Activated T-helper 2 cell treated with anti-CD3 and anti-CD28 coated beads, Interferon-gamma antibody, Interleukin-2, Interleukin-4, amounts not matched to agents 10 μg/mL and 5 μg/mL and 100 μg/mL, durations not matched to agents 14 hours and 24 hours and 36 hours (primary cell): ENCODE measurements at regions of chr5 and their contacts with region 1.

Region 1: DNA sequence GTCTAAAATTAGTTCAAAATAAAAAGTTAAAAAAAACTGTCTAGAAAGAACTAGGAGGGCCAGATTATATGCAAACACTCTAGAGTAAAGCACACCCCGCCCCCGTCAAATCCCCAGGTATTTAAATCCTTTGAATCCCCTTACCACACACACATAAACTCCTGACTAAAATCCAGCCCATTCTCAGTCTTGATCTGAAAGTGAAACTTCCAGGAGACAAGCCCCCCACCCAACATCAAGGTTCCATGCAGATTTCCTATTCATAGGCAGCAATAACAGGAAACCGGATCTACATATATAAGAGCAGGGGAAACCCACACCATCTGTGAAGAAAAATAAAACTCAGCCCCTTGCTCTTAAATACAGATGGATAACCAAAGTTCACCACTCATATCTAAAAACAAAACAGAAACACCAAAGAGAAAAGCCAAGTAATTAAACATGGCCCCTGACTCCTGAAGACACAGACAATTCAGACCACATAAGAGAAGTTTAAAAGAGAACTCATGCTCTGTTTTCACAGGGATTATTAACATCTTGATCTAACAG is 42.3 kb downstream of the MARCHF3 start:
- DNase-seq: peak; percentile 15
- H3K4me3 Mint-ChIP-seq: no peak overlapping the region
- H3K27ac Mint-ChIP-seq: peak overlapping the region; percentile 50
- H3K4me1 Mint-ChIP-seq: peaks cover 13% of the 10 kb centered on the region
- H3K27me3 Mint-ChIP-seq: no peaks in the 10 kb centered on the region

Region 2: DNA sequence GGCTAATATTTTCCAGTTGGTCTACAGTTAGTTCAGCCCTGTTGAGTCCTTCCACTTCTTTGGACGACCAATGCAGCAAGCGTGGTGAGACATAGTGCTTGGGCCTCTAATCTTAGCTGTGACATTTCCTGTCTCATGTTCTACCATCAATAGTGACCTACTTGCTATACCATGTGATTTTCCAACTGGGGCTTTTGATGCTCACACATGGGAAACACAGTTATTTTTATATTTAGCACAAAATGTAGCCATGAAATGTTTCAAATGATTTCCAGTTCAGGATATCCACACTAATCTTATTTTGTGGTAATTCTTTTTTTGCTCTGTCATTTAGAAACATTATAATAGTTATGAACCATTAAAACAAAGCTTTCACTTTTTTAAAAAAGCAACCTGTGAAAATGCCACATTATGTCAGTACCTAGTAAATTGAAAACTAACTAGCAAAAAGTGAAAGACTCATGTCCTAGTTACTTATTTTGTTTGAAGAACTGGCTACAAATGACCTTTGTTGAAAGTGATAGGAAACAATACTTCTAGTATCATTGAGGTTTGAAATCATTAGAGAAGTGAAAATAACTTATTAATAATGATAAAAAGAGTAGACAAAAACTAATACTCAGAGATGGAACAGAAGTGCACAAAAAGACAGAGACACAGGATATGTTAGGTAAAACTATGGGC is 24.0 kb after region 1 on chr5:
- intact Hi-C with region 1: loop called (anchors 2 kb)
- DNase-seq: no peak
- H3K4me3 Mint-ChIP-seq: no peak overlapping the region
- H3K27ac Mint-ChIP-seq: no peak overlapping the region
- H3K4me1 Mint-ChIP-seq: peaks cover 2% of the 10 kb centered on the region
- H3K27me3 Mint-ChIP-seq: peaks cover 3% of the 10 kb centered on the region

Region 3: GRCh38 chr5:127072861-127073846 is 85.1 kb after region 1 on chr5 and contains the start of gene C5orf63:
- intact Hi-C with region 1: loop called (anchors 10 kb)
- DNase-seq: peak; percentile 68
- H3K4me3 Mint-ChIP-seq: peak within 1 kb of the TSS; percentile 94
- H3K27ac Mint-ChIP-seq: peak within 1 kb of the TSS; percentile 91
- H3K4me1 Mint-ChIP-seq: peaks cover 22% of the 10 kb centered on the region
- H3K27me3 Mint-ChIP-seq: no peaks in the 10 kb centered on the region
- total RNA-seq, gene C5orf63: 6.1 and 6.4 TPM in 2 replicates

Region 4: GRCh38 chr5:127305493-127305892 is 317.4 kb after region 1 on chr5:
- intact Hi-C with region 1: no loop called
- DNase-seq: no peak
- H3K4me3 Mint-ChIP-seq: no peak overlapping the region
- H3K27ac Mint-ChIP-seq: no peak overlapping the region
- H3K4me1 Mint-ChIP-seq: no peaks in the 10 kb centered on the region
- H3K27me3 Mint-ChIP-seq: peaks cover 18% of the 10 kb centered on the region